Natural killer cell (primary cell): ENCODE measurements at regions of chr1 and their contacts with region 1.

Region 1: GRCh38 chr1:200888349-200888838 is 6.3 kb upstream of the INAVA start:
- DNase-seq: peak; percentile 75 to 86
- ATAC-seq: peak; percentile 79 to 95 (median 90)
- H3K4me3 ChIP-seq: peak overlapping the region; percentile 9
- H3K4me3 Mint-ChIP-seq: peak overlapping the region; percentile 89
- H3K27ac ChIP-seq: peak overlapping the region; percentile 61
- H3K27ac Mint-ChIP-seq: peak overlapping the region; percentile 92 to 93
- H3K4me1 ChIP-seq: peaks cover 79% of the 10 kb centered on the region
- H3K4me1 Mint-ChIP-seq: peaks cover 72 to 80% of the 10 kb centered on the region in 2 donors
- H3K27me3 ChIP-seq: peaks cover 18% of the 10 kb centered on the region
- H3K27me3 Mint-ChIP-seq: peaks cover 7 to 8% of the 10 kb centered on the region in 2 donors
- CTCF ChIP-seq: no peak

Region 2: GRCh38 chr1:200154069-200154767 is 734.2 kb before region 1 on chr1:
- intact Hi-C with region 1: loop called (anchors 10 kb)
- DNase-seq: peak; percentile 55 to 80
- ATAC-seq: peak; percentile 86 to 97 (median 92)
- H3K4me3 ChIP-seq: no peak overlapping the region
- H3K4me3 Mint-ChIP-seq: peak overlapping the region; percentile 64
- H3K27ac ChIP-seq: peak overlapping the region; percentile 66
- H3K27ac Mint-ChIP-seq: peak overlapping the region; percentile 79 to 86
- H3K4me1 ChIP-seq: peaks cover 14% of the 10 kb centered on the region
- H3K4me1 Mint-ChIP-seq: peaks cover 25 to 28% of the 10 kb centered on the region in 2 donors
- H3K27me3 ChIP-seq: no peaks in the 10 kb centered on the region
- H3K27me3 Mint-ChIP-seq: peaks cover 4 to 9% of the 10 kb centered on the region in 2 donors
- CTCF ChIP-seq: no peak

Region 3: DNA sequence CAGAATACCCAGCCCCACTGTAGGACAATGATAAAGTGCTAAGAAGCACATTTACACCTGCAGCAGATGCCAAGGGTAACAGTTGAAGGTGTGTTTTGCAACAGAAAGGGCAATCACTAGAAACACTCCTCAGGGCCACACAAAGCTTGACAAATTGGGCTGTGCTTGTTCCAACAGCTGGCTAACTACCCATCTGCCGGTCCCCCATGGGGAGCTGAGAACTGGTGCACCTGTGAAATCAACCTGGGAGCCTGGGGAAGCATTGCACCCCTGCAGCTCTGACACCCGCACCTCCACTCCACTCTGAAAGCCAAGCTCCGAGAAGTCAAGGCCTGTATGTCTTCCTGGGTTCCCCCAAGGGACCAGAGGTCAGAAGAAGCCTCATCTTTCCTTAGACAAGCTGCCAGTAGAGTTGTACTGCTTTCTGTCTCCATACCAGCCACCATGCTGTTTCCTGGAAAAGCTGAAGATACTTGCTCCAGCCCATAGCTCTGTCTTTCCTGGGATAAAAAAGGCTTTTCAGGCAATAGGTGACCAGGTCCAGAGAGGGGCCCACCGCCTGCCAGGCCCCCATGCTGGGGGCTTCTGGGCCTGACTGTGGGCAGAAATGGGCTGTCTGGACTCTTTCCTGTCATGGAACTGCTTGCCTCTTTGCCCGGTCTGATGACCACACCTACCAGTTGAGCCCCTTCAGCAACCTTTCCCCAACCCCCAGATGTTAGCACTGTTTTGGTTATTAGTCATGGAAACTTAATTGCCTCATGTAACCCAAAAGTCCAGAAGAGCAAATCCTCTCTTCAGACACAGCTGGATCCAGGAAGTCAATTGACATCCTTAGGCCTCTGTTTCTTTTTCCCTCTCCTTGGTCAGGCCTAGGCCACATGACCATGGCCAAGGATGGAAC is 361.4 kb before region 1 on chr1:
- intact Hi-C with region 1: no loop called
- DNase-seq: no peak
- ATAC-seq: no peak
- H3K4me3 ChIP-seq: no peak overlapping the region
- H3K4me3 Mint-ChIP-seq: no peak overlapping the region
- H3K27ac ChIP-seq: no peak overlapping the region
- H3K27ac Mint-ChIP-seq: no peak overlapping the region
- H3K4me1 ChIP-seq: peaks cover 15% of the 10 kb centered on the region
- H3K4me1 Mint-ChIP-seq: peaks cover 12% of the 10 kb centered on the region in 2 donors
- H3K27me3 ChIP-seq: no peaks in the 10 kb centered on the region
- H3K27me3 Mint-ChIP-seq: no peaks in the 10 kb centered on the region
- CTCF ChIP-seq: no peak

Region 4: DNA sequence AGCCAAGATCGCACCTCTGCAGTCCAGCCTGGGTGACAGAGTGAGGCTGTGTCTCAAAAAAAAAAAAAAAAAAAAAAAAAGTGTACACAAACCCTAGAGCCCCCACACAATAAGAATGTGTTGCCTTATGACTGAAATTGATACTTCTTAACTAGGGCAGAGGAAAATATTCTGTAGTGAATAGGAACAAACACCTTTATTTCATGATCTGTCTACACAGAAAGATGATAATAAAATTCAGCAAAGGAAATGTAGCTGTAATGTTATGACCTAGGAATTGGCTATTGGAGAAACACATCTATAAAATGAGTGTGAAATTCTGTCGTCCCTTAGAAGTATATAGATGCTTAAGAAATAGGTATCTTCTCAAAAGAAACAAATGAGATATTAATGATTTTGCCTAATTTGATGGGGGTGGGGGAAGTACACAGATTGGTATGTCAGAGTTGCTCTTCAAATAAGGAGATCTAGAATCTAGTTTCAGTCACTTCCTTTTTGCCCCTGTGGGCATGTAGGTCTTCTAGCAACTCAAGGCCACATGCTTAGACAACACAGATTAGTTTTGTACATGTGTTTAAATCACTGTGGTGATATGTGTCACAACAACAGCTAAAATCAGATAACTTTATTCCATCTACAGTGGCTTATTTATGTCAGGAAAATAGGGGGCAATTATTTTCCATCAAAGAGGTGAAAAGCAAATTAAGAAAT is 26.3 kb before region 1 on chr1:
- intact Hi-C with region 1: loop called (anchors 1 kb)
- DNase-seq: peak in 1 of 2 donors; percentile 60
- ATAC-seq: peak; percentile 67 to 76 (median 74)
- H3K4me3 ChIP-seq: no peak overlapping the region
- H3K4me3 Mint-ChIP-seq: peak overlapping the region; percentile 52
- H3K27ac ChIP-seq: peak overlapping the region; percentile 79
- H3K27ac Mint-ChIP-seq: peak overlapping the region; percentile 72 to 87
- H3K4me1 ChIP-seq: peaks cover 22% of the 10 kb centered on the region
- H3K4me1 Mint-ChIP-seq: peaks cover 27 to 39% of the 10 kb centered on the region in 2 donors
- H3K27me3 ChIP-seq: no peaks in the 10 kb centered on the region
- H3K27me3 Mint-ChIP-seq: no peaks in the 10 kb centered on the region
- CTCF ChIP-seq: no peak

Region 5: GRCh38 chr1:200907611-200908097 is 19.3 kb after region 1 on chr1:
- intact Hi-C with region 1: loop called (anchors 1 kb)
- DNase-seq: no peak
- ATAC-seq: no peak
- H3K4me3 ChIP-seq: no peak overlapping the region
- H3K4me3 Mint-ChIP-seq: no peak overlapping the region
- H3K27ac ChIP-seq: no peak overlapping the region
- H3K27ac Mint-ChIP-seq: peak overlapping the region in 1 of 2 donors; percentile 32
- H3K4me1 ChIP-seq: peaks cover 25% of the 10 kb centered on the region
- H3K4me1 Mint-ChIP-seq: peaks cover 0 to 10% of the 10 kb centered on the region in 2 donors
- H3K27me3 ChIP-seq: peaks cover under 1% of the 10 kb centered on the region
- H3K27me3 Mint-ChIP-seq: peaks cover 10% of the 10 kb centered on the region in 2 donors
- CTCF ChIP-seq: no peak

Region 6: GRCh38 chr1:201023517-201023902 is 135.1 kb after region 1 on chr1 and contains the start of gene KIF21B:
- intact Hi-C with region 1: loop called (anchors 5 kb)
- DNase-seq: peak; percentile 93 to 94
- ATAC-seq: peak; percentile 81 to 94 (median 84)
- H3K4me3 ChIP-seq: peak within 1 kb of the TSS; percentile 68
- H3K4me3 Mint-ChIP-seq: peak within 1 kb of the TSS; percentile 98
- H3K27ac ChIP-seq: peak within 1 kb of the TSS; percentile 80
- H3K27ac Mint-ChIP-seq: peak within 1 kb of the TSS; percentile 98 to 99
- H3K4me1 ChIP-seq: peaks cover 69% of the 10 kb centered on the region
- H3K4me1 Mint-ChIP-seq: peaks cover 49 to 61% of the 10 kb centered on the region in 2 donors
- H3K27me3 ChIP-seq: no peaks in the 10 kb centered on the region
- H3K27me3 Mint-ChIP-seq: no peaks in the 10 kb centered on the region
- CTCF ChIP-seq: no peak
- total RNA-seq, gene KIF21B: 102 to 129 (median 126) TPM